Heart left ventricle (tissue), 16 donors: ENCODE measurements at regions of chr15 and their contacts with region 1.

Region 1: DNA sequence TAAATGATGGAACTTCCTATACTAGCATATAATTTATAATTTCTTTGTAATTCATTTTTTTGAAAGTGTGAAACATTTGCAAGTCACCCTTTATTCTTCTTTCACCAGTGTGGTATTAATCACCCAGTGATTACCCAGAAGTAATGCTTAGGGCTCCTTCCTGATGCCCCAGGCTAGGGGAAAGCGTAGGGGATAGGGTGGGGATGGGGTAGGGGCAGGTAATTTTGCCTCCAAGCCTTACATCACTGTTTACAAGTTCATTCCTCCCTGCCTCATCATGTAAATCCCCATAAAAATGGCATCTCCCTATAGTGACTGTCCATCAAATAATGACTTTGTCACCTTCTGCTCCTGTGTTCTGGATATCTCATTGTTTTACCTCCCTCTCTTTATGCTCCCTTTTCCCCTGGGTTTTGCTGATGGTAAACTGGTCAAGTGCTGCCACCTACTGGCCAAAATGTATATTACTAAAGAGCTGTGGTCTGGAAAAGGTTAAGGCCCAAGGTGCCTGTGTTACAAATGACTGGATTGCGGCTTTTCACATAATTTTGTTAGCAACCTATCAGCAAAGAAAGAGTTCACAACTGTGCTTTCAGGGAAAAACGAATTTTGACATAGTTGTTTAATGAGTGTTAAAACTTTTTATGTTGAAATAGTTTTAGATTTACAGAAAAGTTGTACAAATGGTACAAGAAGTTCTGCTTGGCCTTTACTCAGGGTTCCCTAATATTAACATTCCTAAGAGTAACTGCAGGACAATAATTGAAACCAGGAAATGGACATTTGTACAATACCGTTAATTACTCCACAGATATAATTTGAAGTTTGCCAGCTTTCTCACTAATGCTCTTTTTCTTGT is 54.7 kb downstream of the ONECUT1 start:
- DNase-seq: peak in 2 of 5 donors; percentile 51 to 52
- ATAC-seq: peak; percentile 68 to 88 (median 86)
- H3K4me3 ChIP-seq: no peak overlapping the region
- H3K27ac ChIP-seq: no peak overlapping the region
- H3K4me1 ChIP-seq: peaks cover 0 to 23% (median 9%) of the 10 kb centered on the region in 12 donors
- H3K27me3 ChIP-seq: no peaks in the 10 kb centered on the region
- CTCF ChIP-seq: peak; percentile 68 to 92 (median 86)
- POLR2A ChIP-seq: no peak

Region 2: DNA sequence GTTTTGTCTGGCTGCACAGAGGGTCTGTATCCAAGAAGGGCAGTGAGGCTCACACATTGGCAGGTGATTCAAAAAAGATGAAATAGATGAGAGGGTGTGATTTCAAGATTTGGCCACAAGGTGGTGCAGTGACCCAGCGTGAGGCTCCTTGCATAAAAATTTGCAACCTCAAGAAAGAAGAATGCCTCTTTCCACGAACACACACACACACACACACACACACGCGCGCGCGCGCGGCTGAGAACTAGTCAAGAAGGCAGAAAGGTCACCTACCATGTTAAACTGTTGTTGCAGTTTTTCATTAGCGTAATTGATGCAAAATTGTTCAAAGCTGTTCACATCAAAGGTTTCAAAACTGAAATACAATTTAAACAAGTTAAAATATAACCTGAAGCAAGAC is 479.1 kb before region 1 on chr15:
- intact Hi-C with region 1: loop called (anchors 1 to 5 kb)
- DNase-seq: peak in 4 of 5 donors; percentile 38 to 66 (median 60)
- ATAC-seq: peak; percentile 41 to 67 (median 54)
- H3K4me3 ChIP-seq: peak overlapping the region in 1 of 12 donors; percentile 3
- H3K27ac ChIP-seq: no peak overlapping the region
- H3K4me1 ChIP-seq: peaks cover 0 to 26% (median 12%) of the 10 kb centered on the region in 12 donors
- H3K27me3 ChIP-seq: no peaks in the 10 kb centered on the region
- CTCF ChIP-seq: peak; percentile 67 to 83 (median 74)
- POLR2A ChIP-seq: no peak

Region 3: GRCh38 chr15:52440400-52440799 is 295.1 kb before region 1 on chr15:
- intact Hi-C with region 1: no loop called
- DNase-seq: no peak
- ATAC-seq: no peak
- H3K4me3 ChIP-seq: no peak overlapping the region
- H3K27ac ChIP-seq: peak overlapping the region in 1 of 12 donors; percentile 63
- H3K4me1 ChIP-seq: peaks cover 0 to 64% (median 17%) of the 10 kb centered on the region in 12 donors
- H3K27me3 ChIP-seq: no peaks in the 10 kb centered on the region
- CTCF ChIP-seq: no peak
- POLR2A ChIP-seq: no peak

Region 4: GRCh38 chr15:52609593-52609992 is 125.9 kb before region 1 on chr15:
- intact Hi-C with region 1: loop called in 3 of 10 experiments (anchors 10 kb)
- DNase-seq: no peak
- ATAC-seq: no peak
- H3K4me3 ChIP-seq: no peak overlapping the region
- H3K27ac ChIP-seq: no peak overlapping the region
- H3K4me1 ChIP-seq: no peaks in the 10 kb centered on the region
- H3K27me3 ChIP-seq: no peaks in the 10 kb centered on the region
- CTCF ChIP-seq: no peak
- POLR2A ChIP-seq: no peak

Region 5: DNA sequence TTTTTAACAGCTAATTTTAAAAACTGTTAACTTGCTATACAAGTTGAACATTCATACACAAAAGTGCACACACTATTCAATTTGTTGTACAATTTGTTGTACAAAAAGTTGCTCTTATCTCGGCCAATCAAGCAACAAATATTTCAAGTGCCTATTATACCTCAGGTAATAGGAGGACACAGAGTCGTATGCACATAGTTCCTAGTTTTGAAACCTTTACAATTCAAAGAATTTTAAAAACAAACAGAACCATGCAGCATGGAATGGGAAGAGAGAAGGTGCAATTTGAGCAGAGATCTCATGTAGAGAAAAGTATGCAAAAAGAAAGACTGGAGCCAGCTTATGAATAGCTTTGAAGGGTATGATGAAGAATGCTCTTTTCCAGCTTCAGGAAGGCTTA is 120.2 kb before region 1 on chr15:
- intact Hi-C with region 1: loop called in 2 of 10 experiments (anchors 10 kb)
- DNase-seq: no peak
- ATAC-seq: no peak
- H3K4me3 ChIP-seq: no peak overlapping the region
- H3K27ac ChIP-seq: no peak overlapping the region
- H3K4me1 ChIP-seq: no peaks in the 10 kb centered on the region
- H3K27me3 ChIP-seq: no peaks in the 10 kb centered on the region
- CTCF ChIP-seq: no peak
- POLR2A ChIP-seq: no peak

Region 6: GRCh38 chr15:52626671-52627369 is 108.6 kb before region 1 on chr15:
- intact Hi-C with region 1: loop called in 1 of 10 experiments (anchors 10 kb)
- DNase-seq: no peak
- ATAC-seq: no peak
- H3K4me3 ChIP-seq: no peak overlapping the region
- H3K27ac ChIP-seq: no peak overlapping the region
- H3K4me1 ChIP-seq: peaks cover 0 to 25% (median 3%) of the 10 kb centered on the region in 12 donors
- H3K27me3 ChIP-seq: no peaks in the 10 kb centered on the region
- CTCF ChIP-seq: no peak
- POLR2A ChIP-seq: no peak